ENCODE measurements at regions of chr7 and their contacts with region 1.

Region 1: DNA sequence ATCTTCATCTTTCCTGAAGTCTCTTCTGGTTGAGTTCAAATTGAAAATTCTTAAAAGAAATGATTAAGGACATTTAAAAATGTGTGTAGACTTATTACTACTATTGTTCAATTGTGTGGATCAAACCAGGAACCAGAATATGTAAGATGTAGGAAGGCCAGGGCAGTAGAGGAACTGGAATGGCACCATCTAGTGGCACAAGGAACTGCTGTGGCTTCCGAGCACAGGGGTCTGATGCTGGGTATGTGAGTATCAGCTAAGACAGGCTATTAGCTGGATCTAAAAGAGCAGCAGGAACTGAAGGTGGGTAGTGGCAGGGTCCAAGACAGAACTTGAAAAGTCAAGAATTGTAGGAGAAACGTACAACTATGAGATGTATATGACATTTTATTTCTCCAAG is 247.3 kb downstream of the SEMA3A start:
- DNase-seq: no peak
- H3K4me3 Mint-ChIP-seq: no peak overlapping the region
- H3K27ac Mint-ChIP-seq: no peak overlapping the region
- H3K4me1 Mint-ChIP-seq: no peaks in the 10 kb centered on the region
- H3K27me3 Mint-ChIP-seq: no peaks in the 10 kb centered on the region

Region 2: GRCh38 chr7:83599131-83599530 is 348.1 kb before region 1 on chr7:
- CTCF ChIA-PET with region 1: no interaction called
- POLR2A ChIA-PET with region 1: no interaction called
- DNase-seq: no peak
- H3K4me3 Mint-ChIP-seq: no peak overlapping the region
- H3K27ac Mint-ChIP-seq: no peak overlapping the region
- H3K4me1 Mint-ChIP-seq: no peaks in the 10 kb centered on the region
- H3K27me3 Mint-ChIP-seq: no peaks in the 10 kb centered on the region

Region 3: GRCh38 chr7:83936056-83936708 is 11.1 kb before region 1 on chr7:
- CTCF ChIA-PET with region 1: interaction called, 10 read pairs
- POLR2A ChIA-PET with region 1: no interaction called
- DNase-seq: peak; percentile 41
- H3K4me3 Mint-ChIP-seq: no peak overlapping the region
- H3K27ac Mint-ChIP-seq: no peak overlapping the region
- H3K4me1 Mint-ChIP-seq: no peaks in the 10 kb centered on the region
- H3K27me3 Mint-ChIP-seq: no peaks in the 10 kb centered on the region

Region 4: GRCh38 chr7:84042110-84042539 is 94.9 kb after region 1 on chr7:
- CTCF ChIA-PET with region 1: no interaction called
- POLR2A ChIA-PET with region 1: no interaction called
- DNase-seq: no peak
- H3K4me3 Mint-ChIP-seq: no peak overlapping the region
- H3K27ac Mint-ChIP-seq: no peak overlapping the region
- H3K4me1 Mint-ChIP-seq: no peaks in the 10 kb centered on the region
- H3K27me3 Mint-ChIP-seq: no peaks in the 10 kb centered on the region